GM12878 (cell line): ENCODE measurements at regions of chr11 and their contacts with region 1.

Region 1: GRCh38 chr11:83709434-83709833 is 423.3 kb upstream of the CCDC90B start:
- DNase-seq: no peak
- ATAC-seq: no peak
- H3K4me3 ChIP-seq: no peak overlapping the region
- H3K27ac ChIP-seq: no peak overlapping the region
- H3K4me1 ChIP-seq: no peaks in the 10 kb centered on the region; the same call in 1 of the 2 replicates
- H3K27me3 ChIP-seq: no peaks in the 10 kb centered on the region
- CTCF ChIP-seq: no peak
- EP300 ChIP-seq: no peak
- POLR2A ChIP-seq: no peak
- RAD21 ChIP-seq: no peak

Region 2: DNA sequence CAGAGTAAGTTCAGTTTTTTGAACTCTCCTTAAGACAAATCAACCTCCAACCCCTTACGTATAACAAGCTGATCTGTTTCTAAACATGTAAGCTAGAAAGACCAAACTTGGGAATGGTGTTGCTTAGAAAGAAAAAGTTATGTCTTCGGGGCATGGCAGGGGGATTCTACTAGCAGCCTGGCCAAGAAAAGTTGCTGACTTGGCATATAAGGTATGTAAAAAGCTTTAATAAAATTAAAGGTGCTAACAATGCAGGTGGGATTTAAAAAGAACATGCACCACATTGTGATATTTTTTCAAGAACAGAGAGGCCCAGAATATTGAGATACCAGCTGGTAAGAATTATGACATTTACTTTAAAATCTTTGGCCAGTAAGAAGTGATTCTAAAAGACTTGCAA is 11.9 kb before region 1 on chr11:
- CTCF ChIA-PET with region 1: no interaction called
- POLR2A ChIA-PET with region 1: no interaction called
- RAD21 ChIA-PET with region 1: no interaction called
- SMC1A ChIA-PET with region 1: interaction called, 10 read pairs
- in situ Hi-C with region 1: no loop called
- intact Hi-C with region 1: no loop called
- DNase-seq: no peak
- ATAC-seq: no peak
- H3K4me3 ChIP-seq: no peak overlapping the region
- H3K27ac ChIP-seq: no peak overlapping the region
- H3K4me1 ChIP-seq: no peaks in the 10 kb centered on the region; the same call in 1 of the 2 replicates
- H3K27me3 ChIP-seq: no peaks in the 10 kb centered on the region
- CTCF ChIP-seq: no peak
- EP300 ChIP-seq: no peak
- POLR2A ChIP-seq: no peak
- RAD21 ChIP-seq: no peak

Region 3: GRCh38 chr11:83793332-83793731 is 83.9 kb after region 1 on chr11:
- CTCF ChIA-PET with region 1: no interaction called
- POLR2A ChIA-PET with region 1: no interaction called
- RAD21 ChIA-PET with region 1: no interaction called
- SMC1A ChIA-PET with region 1: no interaction called
- in situ Hi-C with region 1: no loop called
- intact Hi-C with region 1: no loop called
- DNase-seq: no peak
- ATAC-seq: no peak
- H3K4me3 ChIP-seq: no peak overlapping the region
- H3K27ac ChIP-seq: no peak overlapping the region
- H3K4me1 ChIP-seq: no peaks in the 10 kb centered on the region
- H3K27me3 ChIP-seq: peaks cover 0 to 2% of the 10 kb centered on the region in 2 experiments; a peak in 1 of 4 replicates
- CTCF ChIP-seq: no peak
- EP300 ChIP-seq: no peak
- POLR2A ChIP-seq: no peak
- RAD21 ChIP-seq: no peak